Right lobe of liver (tissue), 6 donors: ENCODE measurements at regions of chr5 and their contacts with region 1.

Region 1: DNA sequence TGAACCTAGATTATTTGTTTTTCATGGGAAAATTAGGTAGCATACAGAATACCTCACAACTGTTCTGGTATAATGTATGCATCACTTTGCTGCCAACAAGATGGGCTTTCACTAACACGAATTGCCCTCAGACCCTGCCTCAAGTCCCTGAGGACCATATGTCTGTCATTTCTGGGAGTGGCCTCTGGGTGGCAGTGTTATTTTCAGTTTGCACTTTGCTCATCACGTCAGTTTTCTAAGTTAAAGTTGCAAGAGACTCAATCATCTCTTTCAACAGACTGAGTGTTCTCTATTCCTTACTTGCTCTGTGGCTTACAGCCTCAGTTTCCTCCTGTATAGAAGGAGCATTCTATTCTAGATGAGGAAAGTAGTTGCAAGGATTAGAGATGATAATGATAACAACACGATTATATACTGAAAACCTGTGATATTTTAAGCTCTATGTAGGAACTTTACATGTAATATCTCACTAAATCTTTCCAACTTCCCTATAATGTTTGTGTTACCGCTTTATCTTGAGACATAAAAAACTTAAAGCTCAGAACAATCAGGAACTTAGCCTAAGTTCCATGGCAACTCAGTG is 55.7 kb downstream of the TSSK1B start:
- DNase-seq: peak in 2 of 3 donors; percentile 25 to 61
- ATAC-seq: peak; percentile 87 to 94 (median 91)
- H3K4me3 ChIP-seq: no peak overlapping the region
- H3K27ac ChIP-seq: no peak overlapping the region
- H3K4me1 ChIP-seq: no peaks in the 10 kb centered on the region
- H3K27me3 ChIP-seq: no peaks in the 10 kb centered on the region
- CTCF ChIP-seq: peak; percentile 75 to 81 (median 76)
- POLR2A ChIP-seq: no peak

Region 2: DNA sequence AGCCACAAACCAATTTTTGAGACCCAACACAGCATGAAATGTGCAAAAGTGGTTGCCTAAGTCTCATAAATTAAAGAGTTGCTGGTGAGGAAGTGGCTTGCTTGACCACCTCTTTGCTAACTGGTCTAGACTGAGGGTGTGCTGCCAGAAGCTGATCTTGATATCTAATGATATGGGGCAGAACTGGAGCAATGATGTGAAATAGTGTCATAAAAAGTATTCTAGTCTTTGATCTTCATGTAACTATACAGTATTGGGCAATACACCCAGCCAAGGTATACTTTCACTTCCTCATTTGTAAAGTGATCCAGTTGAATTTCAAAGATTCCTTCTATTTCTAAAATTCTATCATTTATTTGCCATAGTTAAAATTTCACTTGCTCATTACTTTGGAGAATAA is 128.6 kb after region 1 on chr5:
- intact Hi-C with region 1: loop called in 1 of 2 experiments (anchors 10 kb)
- DNase-seq: no peak
- ATAC-seq: peak in 1 of 4 donors; percentile 30
- H3K4me3 ChIP-seq: no peak overlapping the region
- H3K27ac ChIP-seq: no peak overlapping the region
- H3K4me1 ChIP-seq: no peaks in the 10 kb centered on the region
- H3K27me3 ChIP-seq: no peaks in the 10 kb centered on the region
- CTCF ChIP-seq: no peak
- POLR2A ChIP-seq: no peak

Region 3: DNA sequence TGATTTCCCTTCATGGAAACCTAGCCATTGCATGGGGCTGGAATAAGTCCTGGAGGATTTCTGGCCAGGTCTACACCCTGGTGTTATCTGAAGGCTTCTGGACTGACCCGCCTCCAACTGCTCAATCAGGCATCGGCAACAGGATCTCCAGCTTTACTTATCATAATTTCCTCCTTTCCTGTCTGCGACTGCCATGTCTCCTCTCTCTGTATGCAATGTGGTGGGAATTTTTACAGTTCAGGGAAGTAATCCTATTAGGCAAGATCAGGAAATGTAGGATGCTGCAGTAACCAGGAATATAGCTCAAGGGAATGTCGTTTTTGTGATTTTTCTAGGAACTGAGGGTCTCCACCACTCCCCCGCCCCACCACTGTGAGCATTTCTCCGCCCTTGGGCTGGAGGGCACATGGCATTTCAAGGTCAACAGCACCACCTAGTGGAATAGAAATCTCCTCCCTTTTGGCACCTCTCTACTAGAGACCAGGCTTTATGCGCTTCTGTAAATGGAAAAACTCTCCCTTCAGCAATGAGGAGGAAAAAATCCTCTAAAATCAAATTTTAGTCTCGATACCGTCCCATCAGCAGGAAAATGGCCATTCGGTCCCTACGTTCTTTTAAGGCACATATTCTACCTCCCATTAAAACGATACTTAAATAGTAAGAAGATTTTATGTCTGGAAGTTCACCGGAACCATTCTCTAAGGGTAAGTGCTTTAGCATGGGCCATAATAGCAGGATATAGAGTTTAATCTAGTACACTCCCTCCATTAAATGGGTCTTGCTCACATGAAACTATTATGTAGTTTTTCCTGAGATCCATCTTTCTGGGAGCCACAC is 227.5 kb after region 1 on chr5:
- intact Hi-C with region 1: loop called in 1 of 2 experiments (anchors 10 kb)
- DNase-seq: peak in 2 of 3 donors; percentile 30 to 54
- ATAC-seq: peak; percentile 96 to 99 (median 97)
- H3K4me3 ChIP-seq: no peak overlapping the region
- H3K27ac ChIP-seq: no peak overlapping the region
- H3K4me1 ChIP-seq: no peaks in the 10 kb centered on the region
- H3K27me3 ChIP-seq: no peaks in the 10 kb centered on the region
- CTCF ChIP-seq: peak; percentile 74 to 83 (median 79)
- POLR2A ChIP-seq: no peak